ENCODE measurements at regions of chr20 and their contacts with region 1.

Region 1: DNA sequence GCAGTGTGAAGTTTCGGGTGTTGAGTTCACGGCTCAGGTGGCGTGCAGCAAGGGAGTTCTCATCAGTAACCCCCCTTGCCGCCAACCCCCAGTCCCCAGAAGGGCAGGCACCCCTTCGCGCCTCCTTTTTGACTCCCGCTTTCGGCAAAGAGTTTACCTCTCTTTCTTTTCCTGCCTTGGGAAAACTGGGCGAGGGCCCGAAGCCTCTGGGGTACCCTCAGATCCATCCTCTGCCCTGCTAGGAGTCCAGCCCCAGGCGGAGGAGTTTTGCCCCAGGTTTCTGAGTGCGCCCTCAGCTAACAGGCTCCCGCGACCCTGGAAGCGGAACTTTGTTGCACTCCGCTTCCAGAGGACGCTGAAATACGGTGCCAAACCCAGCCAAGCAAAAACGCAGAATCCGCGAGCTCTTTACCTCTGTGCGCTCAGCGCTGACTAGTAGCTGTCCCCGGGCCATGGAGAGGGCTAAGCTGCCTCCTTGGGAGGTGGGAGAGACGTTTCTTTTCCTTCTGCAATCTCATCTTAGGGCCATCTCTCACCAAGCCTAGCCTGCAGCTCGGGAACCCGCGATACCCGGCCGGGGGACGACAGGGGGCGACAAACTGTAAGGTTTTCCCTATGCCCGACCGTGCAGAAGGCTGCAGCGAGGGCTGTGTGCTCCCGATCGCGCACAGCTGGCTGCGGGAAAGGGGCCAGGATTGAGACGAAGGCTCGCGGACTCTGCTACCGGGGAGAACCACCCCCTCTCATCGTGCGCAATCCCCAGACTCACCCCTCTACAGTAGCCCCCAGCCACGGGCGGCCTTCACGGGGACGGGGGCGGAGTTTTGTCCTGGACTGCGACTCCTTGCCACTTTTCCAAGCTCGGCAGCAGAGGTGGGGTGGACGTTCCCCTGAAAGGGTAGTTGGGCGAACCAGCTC is 2.7 kb upstream of the PAX1 start:
- DNase-seq: peak; percentile 64
- H3K4me3 Mint-ChIP-seq: no peak overlapping the region
- H3K27ac Mint-ChIP-seq: no peak overlapping the region
- H3K4me1 Mint-ChIP-seq: peaks cover 7% of the 10 kb centered on the region
- H3K27me3 Mint-ChIP-seq: peaks cover 77% of the 10 kb centered on the region

Region 2: DNA sequence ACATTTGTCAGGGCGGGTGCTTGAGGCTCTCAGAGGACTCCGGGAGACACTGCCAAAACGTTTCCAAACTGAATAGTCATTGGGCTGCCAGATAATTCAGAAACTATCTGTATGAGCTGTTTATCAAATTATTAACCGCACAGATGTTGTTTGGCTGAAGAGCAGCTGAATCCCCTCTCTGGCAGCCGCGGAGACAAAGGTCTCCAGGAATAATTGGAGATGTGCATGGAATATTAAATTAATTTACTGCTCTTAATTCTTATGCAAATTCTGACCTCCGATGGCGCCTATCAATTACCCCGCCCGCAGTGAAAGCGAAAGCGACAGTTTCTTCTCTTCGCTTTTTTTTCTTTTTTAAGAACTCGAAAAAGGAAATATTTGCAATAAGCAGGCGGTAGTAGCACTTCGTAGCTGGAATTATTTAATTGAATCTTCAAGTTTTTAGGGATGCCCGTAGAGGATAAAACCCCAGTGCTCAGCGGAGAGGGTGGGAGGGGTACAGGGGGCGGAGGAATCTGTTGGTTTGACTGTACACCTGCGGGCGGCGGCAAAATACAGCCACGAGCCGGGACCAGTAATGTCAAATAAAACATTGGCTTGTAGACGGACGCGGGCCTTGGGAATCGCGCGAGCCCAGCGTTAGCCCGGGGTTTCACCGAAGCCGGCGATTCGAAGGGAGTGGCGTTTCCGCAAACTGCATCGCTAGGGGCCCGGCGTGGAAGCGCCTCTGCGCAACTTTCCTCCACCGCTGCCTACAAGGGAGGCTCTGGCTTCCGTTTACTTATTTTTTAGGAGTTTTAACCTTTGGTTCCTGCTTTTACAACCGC is 602.8 kb before region 1 on chr20:
- CTCF ChIA-PET with region 1: no interaction called
- POLR2A ChIA-PET with region 1: no interaction called
- intact Hi-C with region 1: loop called (anchors 5 kb)
- DNase-seq: peak; percentile 68
- H3K4me3 Mint-ChIP-seq: peak overlapping the region; percentile 74
- H3K27ac Mint-ChIP-seq: peak overlapping the region; percentile 63
- H3K4me1 Mint-ChIP-seq: peaks cover 30% of the 10 kb centered on the region
- H3K27me3 Mint-ChIP-seq: peaks cover 68% of the 10 kb centered on the region

Region 3: GRCh38 chr20:21395666-21396598 is 306.9 kb before region 1 on chr20:
- CTCF ChIA-PET with region 1: no interaction called
- POLR2A ChIA-PET with region 1: no interaction called
- intact Hi-C with region 1: loop called (anchors 10 kb)
- DNase-seq: peak; percentile 64
- H3K4me3 Mint-ChIP-seq: peak overlapping the region; percentile 33
- H3K27ac Mint-ChIP-seq: no peak overlapping the region
- H3K4me1 Mint-ChIP-seq: peaks cover 19% of the 10 kb centered on the region
- H3K27me3 Mint-ChIP-seq: peaks cover 72% of the 10 kb centered on the region

Region 4: DNA sequence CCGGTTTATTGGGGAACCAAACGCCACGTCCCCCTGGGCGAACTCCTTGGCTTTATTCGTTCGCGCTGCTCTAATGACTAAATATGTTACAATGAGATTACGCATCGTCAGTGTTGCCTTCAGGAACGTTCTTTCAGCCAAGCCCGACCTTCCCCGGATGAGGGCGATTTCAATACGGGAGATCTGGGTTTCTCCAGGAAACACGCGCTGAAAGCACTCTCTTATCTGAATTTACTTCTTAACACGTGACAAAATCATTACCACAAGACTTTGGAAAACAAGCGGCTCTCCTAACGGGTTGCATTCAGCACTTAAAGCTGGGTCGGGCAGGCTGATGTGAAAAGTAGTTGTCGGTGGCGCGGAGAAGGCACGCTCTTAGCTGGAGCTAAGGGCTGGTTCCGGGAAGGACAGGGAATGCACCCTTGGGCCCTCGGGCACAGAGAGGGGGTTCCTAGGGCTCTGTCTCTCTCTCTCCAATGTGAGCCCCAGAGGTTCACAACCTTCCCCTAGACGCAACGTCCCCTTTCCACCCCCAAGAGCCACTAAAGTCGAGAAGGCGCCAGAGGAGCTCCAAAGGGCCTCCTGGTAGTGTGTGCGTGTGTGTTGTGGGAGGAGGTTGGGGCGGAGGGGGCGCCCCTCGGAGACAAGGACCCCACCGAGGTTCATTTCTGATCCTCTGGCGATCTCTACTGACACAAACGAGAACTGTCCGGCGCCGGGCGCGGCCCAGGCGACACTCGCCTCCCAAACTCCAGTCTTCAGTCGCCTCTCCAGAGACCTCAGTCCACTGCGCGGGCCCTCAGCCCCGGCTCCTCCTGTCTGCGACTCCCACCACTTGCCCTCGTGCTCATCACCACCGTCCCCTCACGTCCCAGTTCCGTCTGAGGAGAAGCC is 181.9 kb before region 1 on chr20:
- CTCF ChIA-PET with region 1: no interaction called
- POLR2A ChIA-PET with region 1: no interaction called
- intact Hi-C with region 1: loop called (anchors 5 kb)
- DNase-seq: no peak
- H3K4me3 Mint-ChIP-seq: peak overlapping the region; percentile 31
- H3K27ac Mint-ChIP-seq: peak overlapping the region; percentile 10
- H3K4me1 Mint-ChIP-seq: peaks cover 33% of the 10 kb centered on the region
- H3K27me3 Mint-ChIP-seq: peaks cover 84% of the 10 kb centered on the region

Region 5: DNA sequence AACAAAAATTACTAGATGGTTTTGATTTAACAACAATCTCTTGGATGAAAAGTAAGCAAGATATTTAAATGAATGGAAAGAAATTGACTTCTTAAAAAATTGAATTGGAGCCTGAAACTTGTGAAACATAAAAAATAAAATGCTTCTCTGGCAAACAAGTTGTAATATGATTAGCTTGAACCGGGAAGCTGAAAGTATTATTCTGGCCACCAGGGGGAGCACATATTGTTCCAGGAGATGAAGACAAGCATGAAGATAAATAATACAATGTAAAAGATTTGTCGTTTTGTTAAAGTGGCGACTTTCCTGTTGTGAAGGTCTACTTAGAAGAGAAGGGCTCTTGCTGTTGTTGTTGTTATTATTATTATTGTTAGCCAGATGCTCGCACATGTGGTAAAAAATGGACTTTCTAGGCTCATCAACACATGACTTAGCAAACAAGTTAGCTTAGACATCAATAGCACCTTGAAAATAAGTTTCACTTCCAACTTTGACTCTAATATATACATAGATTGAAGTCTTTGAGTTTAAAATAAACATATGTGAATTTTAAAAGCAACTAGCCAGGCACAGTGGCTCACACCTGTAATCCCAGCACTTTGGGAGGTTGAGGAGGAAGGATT is 16.9 kb after region 1 on chr20:
- CTCF ChIA-PET with region 1: interaction called, 18 read pairs
- POLR2A ChIA-PET with region 1: no interaction called
- intact Hi-C with region 1: no loop called
- DNase-seq: peak; percentile 43
- H3K4me3 Mint-ChIP-seq: no peak overlapping the region
- H3K27ac Mint-ChIP-seq: no peak overlapping the region
- H3K4me1 Mint-ChIP-seq: no peaks in the 10 kb centered on the region
- H3K27me3 Mint-ChIP-seq: peaks cover 31% of the 10 kb centered on the region

Region 6: DNA sequence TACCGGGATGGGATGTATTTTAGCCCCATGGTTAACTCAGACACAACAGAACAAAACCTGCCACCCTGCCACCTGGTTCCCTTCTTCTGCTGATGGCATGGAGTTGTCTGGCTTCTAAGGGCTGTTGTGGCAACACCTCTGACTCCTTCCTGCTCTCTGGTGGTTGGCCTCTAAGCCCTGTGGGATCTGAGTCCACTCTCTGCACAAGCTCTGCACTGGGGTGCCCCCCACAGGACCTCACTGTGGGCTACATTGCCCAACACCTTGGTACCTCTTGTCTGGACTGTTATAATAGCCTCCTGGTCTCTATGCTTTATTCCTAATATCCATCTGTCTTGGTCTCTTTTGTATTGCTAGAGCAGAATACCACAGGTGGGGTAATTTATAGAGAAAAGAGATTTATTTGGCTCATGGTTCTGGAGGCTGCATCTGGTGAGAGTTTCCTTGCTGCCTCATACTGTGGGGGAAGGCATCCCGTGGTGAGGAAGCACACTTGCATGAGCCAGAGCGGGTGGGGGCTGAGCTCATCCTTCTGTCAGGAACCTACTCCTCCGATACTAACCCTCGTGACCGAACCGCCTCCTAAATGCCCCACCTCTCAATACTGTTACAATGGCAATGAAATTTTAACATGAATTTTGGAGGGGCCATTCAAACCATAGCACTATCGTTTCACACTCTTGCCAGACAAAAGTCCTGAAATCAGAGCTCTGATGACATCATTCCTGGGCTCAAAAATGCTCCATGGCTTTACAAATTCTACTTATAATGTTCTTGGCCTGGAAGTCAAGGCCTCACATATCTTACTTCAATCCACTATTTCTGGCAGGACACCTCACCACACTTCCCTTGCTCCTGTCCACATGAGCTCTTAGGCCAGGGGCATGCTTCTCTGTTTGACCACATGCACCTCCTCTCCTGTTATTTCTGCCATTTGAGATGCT is 129.9 kb after region 1 on chr20:
- CTCF ChIA-PET with region 1: no interaction called
- POLR2A ChIA-PET with region 1: no interaction called
- intact Hi-C with region 1: no loop called
- DNase-seq: no peak
- H3K4me3 Mint-ChIP-seq: no peak overlapping the region
- H3K27ac Mint-ChIP-seq: no peak overlapping the region
- H3K4me1 Mint-ChIP-seq: no peaks in the 10 kb centered on the region
- H3K27me3 Mint-ChIP-seq: no peaks in the 10 kb centered on the region

Region 7: GRCh38 chr20:22586645-22587310 is 884.0 kb after region 1 on chr20:
- CTCF ChIA-PET with region 1: no interaction called
- POLR2A ChIA-PET with region 1: no interaction called
- intact Hi-C with region 1: loop called (anchors 10 kb)
- DNase-seq: peak; percentile 13
- H3K4me3 Mint-ChIP-seq: no peak overlapping the region
- H3K27ac Mint-ChIP-seq: no peak overlapping the region
- H3K4me1 Mint-ChIP-seq: no peaks in the 10 kb centered on the region
- H3K27me3 Mint-ChIP-seq: peaks cover 40% of the 10 kb centered on the region

Measured in activated CD4-positive, alpha-beta memory T cell treated with anti-CD3 and anti-CD28 coated beads for 36 hours (primary cell).